OCI-LY7 (cell line): ENCODE measurements at regions of chr10 and their contacts with region 1.

Region 1: DNA sequence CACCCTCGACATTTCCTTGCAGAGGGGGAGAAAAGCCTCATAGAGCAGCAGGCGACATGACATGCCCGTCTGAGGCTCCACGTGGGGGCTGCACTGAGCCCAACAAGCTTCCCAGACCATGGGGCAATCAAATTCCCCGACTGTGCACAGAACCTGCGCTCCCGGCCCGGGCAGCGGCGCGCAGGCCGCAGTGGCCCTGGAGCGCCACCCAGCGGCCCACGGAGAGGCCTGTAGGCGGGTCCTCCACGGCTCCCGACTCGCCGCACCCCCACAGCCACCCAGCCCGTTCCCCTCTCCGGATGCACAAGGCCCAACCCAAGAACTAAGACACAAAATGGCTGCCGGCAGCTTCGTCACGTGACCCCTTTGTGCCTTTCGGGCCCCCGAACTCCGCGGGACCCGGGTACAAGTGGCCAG is 816 bp downstream of the EPC1 start:
- DNase-seq: peak; percentile 96
- H3K4me3 ChIP-seq: peak overlapping the region; percentile 82
- H3K27ac ChIP-seq: peak overlapping the region; percentile 92
- H3K4me1 ChIP-seq: peaks cover 63% of the 10 kb centered on the region
- CTCF ChIP-seq: peak; percentile 94

Region 2: GRCh38 chr10:31928549-31929260 is 417.4 kb before region 1 on chr10 and contains the start of gene ARHGAP12:
- CTCF ChIA-PET with region 1: no interaction called
- POLR2A ChIA-PET with region 1: no interaction called
- intact Hi-C with region 1: loop called (anchors 10 kb)
- DNase-seq: peak; percentile 85
- H3K4me3 ChIP-seq: peak within 1 kb of the TSS; percentile 84
- H3K27ac ChIP-seq: peak within 1 kb of the TSS; percentile 61
- H3K4me1 ChIP-seq: peaks cover 44% of the 10 kb centered on the region
- CTCF ChIP-seq: no peak
- total RNA-seq, gene ARHGAP12: 11.8 and 15.6 TPM in 2 replicates

Region 3: GRCh38 chr10:32190890-32191491 is 155.2 kb before region 1 on chr10:
- CTCF ChIA-PET with region 1: no interaction called
- POLR2A ChIA-PET with region 1: interaction called, 3 read pairs
- intact Hi-C with region 1: loop called (anchors 1 kb)
- DNase-seq: peak; percentile 71
- H3K4me3 ChIP-seq: no peak overlapping the region
- H3K27ac ChIP-seq: no peak overlapping the region
- H3K4me1 ChIP-seq: peaks cover 6% of the 10 kb centered on the region
- CTCF ChIP-seq: peak; percentile 94

Region 4: DNA sequence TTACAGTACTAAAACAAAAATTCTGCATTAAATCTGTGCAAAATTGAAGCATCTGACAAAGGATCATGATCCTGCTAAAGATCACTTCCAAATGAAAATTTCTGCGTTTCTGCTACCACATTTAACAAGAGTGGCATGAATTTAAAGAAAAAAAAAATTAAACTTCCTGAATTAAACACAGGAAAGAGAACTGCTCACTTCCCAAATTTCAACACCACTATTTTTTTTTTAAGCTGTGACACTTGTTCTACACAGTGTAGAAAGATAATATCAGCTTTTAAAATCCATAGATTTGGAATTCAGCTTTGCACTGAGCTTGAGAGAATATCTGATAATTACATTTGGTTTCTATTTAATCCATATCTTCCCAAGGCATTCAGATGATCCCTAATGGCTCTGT is 72.8 kb before region 1 on chr10:
- CTCF ChIA-PET with region 1: no interaction called
- POLR2A ChIA-PET with region 1: no interaction called
- intact Hi-C with region 1: no loop called
- DNase-seq: no peak
- H3K4me3 ChIP-seq: no peak overlapping the region
- H3K27ac ChIP-seq: no peak overlapping the region
- H3K4me1 ChIP-seq: peaks cover 15% of the 10 kb centered on the region
- CTCF ChIP-seq: no peak

Region 5: DNA sequence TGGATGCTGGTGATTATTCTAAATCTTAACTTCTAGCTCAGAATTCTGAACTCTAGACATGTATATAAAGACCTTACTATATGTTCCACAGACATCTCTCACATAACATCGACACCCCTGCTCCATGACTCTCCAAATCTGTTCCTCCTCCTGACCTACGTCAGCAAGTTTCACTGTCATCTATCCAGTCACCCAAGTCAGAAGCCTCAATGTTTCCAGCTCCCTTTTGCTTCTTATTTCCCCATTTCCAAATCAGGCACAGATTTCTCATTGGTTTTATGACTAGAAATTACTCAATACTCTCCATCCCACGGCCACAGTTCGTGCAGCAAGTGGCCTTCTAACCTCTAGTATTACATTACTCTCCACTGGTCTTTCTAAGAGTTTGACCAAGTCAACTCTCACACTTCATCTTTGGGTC is 27.7 kb before region 1 on chr10:
- CTCF ChIA-PET with region 1: no interaction called
- POLR2A ChIA-PET with region 1: interaction called, 5 read pairs
- intact Hi-C with region 1: loop called (anchors 1 kb)
- DNase-seq: peak; percentile 33
- H3K4me3 ChIP-seq: peak overlapping the region; percentile 55
- H3K27ac ChIP-seq: peak overlapping the region; percentile 88
- H3K4me1 ChIP-seq: peaks cover 66% of the 10 kb centered on the region
- CTCF ChIP-seq: no peak

Region 6: DNA sequence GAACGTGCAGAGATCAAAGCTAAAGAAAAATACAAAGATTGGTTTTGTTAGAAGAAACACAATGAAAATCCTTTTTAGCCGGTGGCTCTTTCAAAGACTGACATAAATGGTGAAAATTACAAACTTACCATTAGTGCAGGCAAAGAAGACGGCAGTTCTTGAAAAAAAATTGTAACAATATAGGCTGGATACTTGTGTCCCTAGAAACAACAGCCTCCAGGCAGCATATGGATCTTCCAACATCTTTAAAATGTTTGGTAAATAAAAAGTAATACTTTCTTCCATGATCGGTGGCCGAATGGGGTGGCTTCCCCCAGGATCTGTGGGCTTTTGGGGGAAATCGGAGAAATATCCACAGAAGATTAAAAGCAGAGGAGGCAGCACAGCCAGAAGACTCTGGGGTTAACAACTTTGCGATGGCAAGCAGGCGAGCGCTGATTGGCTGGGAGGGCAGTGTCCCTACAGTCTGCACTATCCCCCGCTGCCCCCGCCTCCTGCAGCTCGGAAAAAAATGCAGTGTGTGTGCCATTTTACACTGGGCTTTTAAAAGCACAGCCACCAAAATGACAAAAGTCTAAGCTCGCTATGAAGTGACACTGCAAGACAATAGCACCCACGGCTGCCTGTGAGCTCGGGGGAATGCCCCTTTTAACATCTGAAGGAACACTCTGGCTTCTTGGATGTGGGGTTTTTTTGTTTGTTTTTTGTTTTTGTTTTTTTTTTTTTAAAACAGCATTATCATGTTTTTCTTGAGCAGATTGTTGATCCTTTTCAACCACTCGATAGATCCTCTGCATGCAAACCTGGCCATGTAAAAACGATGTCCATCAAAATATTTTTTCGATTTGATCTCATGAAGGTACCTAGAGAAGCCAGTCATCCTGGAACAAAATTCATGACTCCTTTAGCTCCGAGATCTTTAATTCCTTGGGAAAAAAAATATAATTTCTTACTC is 32.5 kb after region 1 on chr10:
- CTCF ChIA-PET with region 1: no interaction called
- POLR2A ChIA-PET with region 1: interaction called, 12 read pairs
- intact Hi-C with region 1: loop called (anchors 1 kb)
- DNase-seq: peak; percentile 95
- H3K4me3 ChIP-seq: peak overlapping the region; percentile 89
- H3K27ac ChIP-seq: peak overlapping the region; percentile 82
- H3K4me1 ChIP-seq: peaks cover 14% of the 10 kb centered on the region
- CTCF ChIP-seq: no peak